Activated CD4-positive, alpha-beta T cell treated with anti-CD3 and anti-CD28 coated beads for 36 hours (primary cell): ENCODE measurements at regions of chr11 and their contacts with region 1.

Region 1: GRCh38 chr11:117010808-117011540 is 87.3 kb downstream of the SIK3 start:
- DNase-seq: no peak
- ATAC-seq: peak; percentile 93
- H3K4me3 Mint-ChIP-seq: no peak overlapping the region
- H3K27ac Mint-ChIP-seq: peak overlapping the region; percentile 67
- H3K4me1 Mint-ChIP-seq: peaks cover 44% of the 10 kb centered on the region
- H3K27me3 Mint-ChIP-seq: no peaks in the 10 kb centered on the region

Region 2: GRCh38 chr11:116927163-116927974 is 83.6 kb before region 1 on chr11:
- CTCF ChIA-PET with region 1: interaction called, 5 read pairs
- POLR2A ChIA-PET with region 1: interaction called, 5 read pairs
- intact Hi-C with region 1: loop called (anchors 1 kb)
- DNase-seq: peak; percentile 72
- ATAC-seq: peak; percentile 33
- H3K4me3 Mint-ChIP-seq: peak overlapping the region; percentile 18
- H3K27ac Mint-ChIP-seq: peak overlapping the region; percentile 49
- H3K4me1 Mint-ChIP-seq: peaks cover 74% of the 10 kb centered on the region
- H3K27me3 Mint-ChIP-seq: no peaks in the 10 kb centered on the region

Region 3: GRCh38 chr11:116948391-116948790 is 62.6 kb before region 1 on chr11:
- CTCF ChIA-PET with region 1: interaction called, 3 read pairs
- POLR2A ChIA-PET with region 1: interaction called, 5 read pairs
- intact Hi-C with region 1: loop called in 1 of 2 experiments (anchors 1 kb)
- DNase-seq: peak; percentile 61
- ATAC-seq: peak; percentile 90
- H3K4me3 Mint-ChIP-seq: no peak overlapping the region
- H3K27ac Mint-ChIP-seq: no peak overlapping the region
- H3K4me1 Mint-ChIP-seq: peaks cover 24% of the 10 kb centered on the region
- H3K27me3 Mint-ChIP-seq: no peaks in the 10 kb centered on the region

Region 4: DNA sequence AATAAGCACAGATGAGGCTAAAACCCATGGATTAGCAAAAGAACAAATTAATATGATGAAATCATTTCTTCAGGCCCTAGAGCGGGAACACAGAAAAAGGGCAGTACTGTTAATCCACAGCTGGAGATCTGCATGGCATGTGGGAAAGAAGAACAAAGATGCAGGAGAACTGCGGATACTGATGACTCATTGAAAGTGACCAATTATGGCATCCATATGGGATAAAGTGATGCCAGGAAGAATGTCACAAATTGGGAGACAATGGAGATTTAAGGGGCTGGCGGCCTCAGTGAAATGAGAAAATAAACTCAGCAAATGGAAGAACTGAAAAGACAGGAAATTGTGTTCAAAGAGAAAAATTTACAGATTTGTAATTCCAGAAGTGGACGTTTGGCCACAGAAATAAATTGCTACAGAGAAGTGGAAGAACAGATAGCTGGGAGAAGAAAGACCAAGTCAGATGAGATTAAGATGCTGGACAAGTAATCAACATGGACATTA is 47.8 kb after region 1 on chr11:
- CTCF ChIA-PET with region 1: no interaction called
- POLR2A ChIA-PET with region 1: interaction called, 17 read pairs
- intact Hi-C with region 1: loop called (anchors 1 kb)
- DNase-seq: no peak
- ATAC-seq: no peak
- H3K4me3 Mint-ChIP-seq: no peak overlapping the region
- H3K27ac Mint-ChIP-seq: no peak overlapping the region
- H3K4me1 Mint-ChIP-seq: peaks cover 54% of the 10 kb centered on the region
- H3K27me3 Mint-ChIP-seq: no peaks in the 10 kb centered on the region

Region 5: GRCh38 chr11:117064275-117064674 is 53.3 kb after region 1 on chr11:
- CTCF ChIA-PET with region 1: no interaction called
- POLR2A ChIA-PET with region 1: interaction called, 17 read pairs
- intact Hi-C with region 1: loop called (anchors 1 kb)
- DNase-seq: no peak
- ATAC-seq: no peak
- H3K4me3 Mint-ChIP-seq: peak overlapping the region; percentile 26
- H3K27ac Mint-ChIP-seq: peak overlapping the region; percentile 28
- H3K4me1 Mint-ChIP-seq: peaks cover 63% of the 10 kb centered on the region
- H3K27me3 Mint-ChIP-seq: no peaks in the 10 kb centered on the region

Region 6: GRCh38 chr11:117072517-117073461 is 61.8 kb after region 1 on chr11:
- CTCF ChIA-PET with region 1: no interaction called
- POLR2A ChIA-PET with region 1: no interaction called
- intact Hi-C with region 1: loop called in 1 of 2 experiments (anchors 1 kb)
- DNase-seq: no peak
- ATAC-seq: peak; percentile 59
- H3K4me3 Mint-ChIP-seq: peak overlapping the region; percentile 15
- H3K27ac Mint-ChIP-seq: peak overlapping the region; percentile 42
- H3K4me1 Mint-ChIP-seq: peaks cover 61% of the 10 kb centered on the region
- H3K27me3 Mint-ChIP-seq: no peaks in the 10 kb centered on the region

Region 7: DNA sequence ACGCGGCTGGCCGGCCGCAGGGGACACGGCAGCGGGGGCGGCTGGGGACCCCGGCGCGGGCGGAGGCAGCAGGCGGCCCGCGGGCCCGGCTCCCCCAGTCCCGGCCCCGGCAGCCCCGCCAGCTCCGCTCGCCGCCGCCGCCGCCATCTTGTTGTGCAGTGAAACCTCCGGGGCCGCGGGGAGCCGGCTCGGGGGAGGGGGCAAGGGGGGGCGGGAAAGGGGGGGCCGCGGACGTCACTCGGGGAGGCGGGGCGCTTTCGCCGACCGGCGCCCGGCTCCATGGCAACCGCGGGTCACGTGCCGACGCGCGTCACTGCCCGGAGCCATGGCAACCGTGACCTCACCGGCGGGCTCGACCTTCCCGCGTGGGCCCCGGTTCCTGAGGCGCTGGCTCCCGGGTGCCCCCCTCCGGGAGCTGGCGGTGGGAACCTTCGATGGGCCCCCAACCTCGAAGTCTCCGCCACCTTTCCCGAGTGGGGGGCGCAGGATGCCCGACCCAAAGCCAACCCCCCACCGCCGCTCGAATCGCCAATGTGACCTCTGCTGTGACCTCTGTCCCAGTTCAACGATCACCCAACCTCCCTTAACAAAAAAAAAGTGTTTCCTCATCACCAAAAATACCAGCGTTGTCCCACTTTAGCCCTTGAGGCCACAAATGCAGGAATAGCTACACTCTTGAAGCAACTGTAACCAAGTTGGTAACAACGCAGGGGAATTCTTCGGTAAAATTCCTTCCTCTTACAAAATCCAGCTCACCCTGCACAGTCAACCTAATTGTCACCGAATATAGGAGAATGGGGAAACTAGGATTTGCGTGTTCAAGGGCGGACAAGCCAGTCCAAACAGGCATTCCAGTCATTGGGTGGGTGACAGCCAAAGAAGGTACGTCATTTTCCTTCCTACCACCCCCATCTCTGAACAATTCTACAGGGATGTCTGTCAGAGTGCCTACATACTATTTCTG is 87.6 kb after region 1 on chr11 and contains the start of gene SIK3:
- CTCF ChIA-PET with region 1: interaction called, 3 read pairs
- POLR2A ChIA-PET with region 1: interaction called, 9 read pairs
- intact Hi-C with region 1: loop called in 1 of 2 experiments (anchors 2 kb)
- DNase-seq: peak; percentile 96
- ATAC-seq: peak; percentile 71
- H3K4me3 Mint-ChIP-seq: peak within 1 kb of the TSS; percentile 93
- H3K27ac Mint-ChIP-seq: peak within 1 kb of the TSS; percentile 93
- H3K4me1 Mint-ChIP-seq: peaks cover 46% of the 10 kb centered on the region
- H3K27me3 Mint-ChIP-seq: no peaks in the 10 kb centered on the region
- total RNA-seq, gene SIK3: 23.6 to 25.3 TPM